ENCODE measurements at regions of chr1 and their contacts with region 1.

Region 1: DNA sequence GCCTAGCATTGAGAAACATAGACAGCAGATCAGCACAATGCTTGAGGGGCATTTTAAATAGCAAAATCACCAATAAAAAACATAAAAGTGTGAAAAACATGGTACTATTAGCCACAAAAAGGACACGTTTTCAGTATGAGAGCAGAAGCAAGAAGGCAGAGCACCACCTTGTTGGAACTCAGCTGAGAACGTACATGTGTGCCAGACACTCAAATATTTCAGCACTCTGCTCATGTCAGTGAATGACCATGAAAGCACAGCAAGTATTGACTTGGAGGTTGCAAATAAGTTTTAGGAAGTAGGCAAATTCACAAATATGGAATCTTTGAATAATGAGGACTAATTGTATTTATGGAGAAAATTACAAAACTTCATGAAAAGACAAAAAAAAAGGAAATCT is 193.4 kb upstream of the PKN2 start:
- DNase-seq: no peak
- H3K4me3 ChIP-seq: no peak overlapping the region
- H3K27ac ChIP-seq: no peak overlapping the region
- H3K4me1 ChIP-seq: no peaks in the 10 kb centered on the region
- CTCF ChIP-seq: no peak

Region 2: DNA sequence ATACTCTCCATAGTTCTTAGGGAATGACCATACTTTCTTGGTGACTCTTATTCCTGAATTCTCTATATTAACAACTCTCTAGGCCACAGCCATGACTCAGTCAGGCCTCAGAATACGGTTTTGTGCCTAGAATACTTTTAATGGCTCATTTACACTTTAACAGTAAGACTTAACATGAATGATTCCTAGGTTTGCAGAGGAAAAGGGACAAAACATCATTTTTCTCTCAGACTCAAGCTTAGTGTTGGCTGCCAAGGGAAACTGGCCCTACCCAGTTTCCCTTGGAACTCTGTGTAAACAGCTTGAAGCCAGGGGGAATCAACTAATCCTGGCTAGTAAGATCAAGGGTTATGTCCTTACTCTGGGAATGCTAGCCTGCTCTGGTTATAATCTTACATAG is 28.5 kb after region 1 on chr1:
- CTCF ChIA-PET with region 1: no interaction called
- POLR2A ChIA-PET with region 1: interaction called, 3 read pairs
- intact Hi-C with region 1: loop called (anchors 1 kb)
- DNase-seq: no peak
- H3K4me3 ChIP-seq: no peak overlapping the region
- H3K27ac ChIP-seq: no peak overlapping the region
- H3K4me1 ChIP-seq: no peaks in the 10 kb centered on the region
- CTCF ChIP-seq: no peak